Natural killer cell (primary cell): ENCODE measurements at regions of chr21 and their contacts with region 1.

Region 1: GRCh38 chr21:35026617-35027562 is 22.2 kb downstream of the RUNX1 start:
- DNase-seq: peak; percentile 78 to 95
- ATAC-seq: peak; percentile 81 to 91 (median 87)
- H3K4me3 ChIP-seq: peak overlapping the region; percentile 29
- H3K4me3 Mint-ChIP-seq: peak overlapping the region; percentile 89
- H3K27ac ChIP-seq: peak overlapping the region; percentile 85
- H3K27ac Mint-ChIP-seq: peak overlapping the region; percentile 97 to 98
- H3K4me1 ChIP-seq: peaks cover 70% of the 10 kb centered on the region
- H3K4me1 Mint-ChIP-seq: peaks cover 78 to 86% of the 10 kb centered on the region in 2 donors
- H3K27me3 ChIP-seq: no peaks in the 10 kb centered on the region
- H3K27me3 Mint-ChIP-seq: no peaks in the 10 kb centered on the region
- CTCF ChIP-seq: no peak

Region 2: DNA sequence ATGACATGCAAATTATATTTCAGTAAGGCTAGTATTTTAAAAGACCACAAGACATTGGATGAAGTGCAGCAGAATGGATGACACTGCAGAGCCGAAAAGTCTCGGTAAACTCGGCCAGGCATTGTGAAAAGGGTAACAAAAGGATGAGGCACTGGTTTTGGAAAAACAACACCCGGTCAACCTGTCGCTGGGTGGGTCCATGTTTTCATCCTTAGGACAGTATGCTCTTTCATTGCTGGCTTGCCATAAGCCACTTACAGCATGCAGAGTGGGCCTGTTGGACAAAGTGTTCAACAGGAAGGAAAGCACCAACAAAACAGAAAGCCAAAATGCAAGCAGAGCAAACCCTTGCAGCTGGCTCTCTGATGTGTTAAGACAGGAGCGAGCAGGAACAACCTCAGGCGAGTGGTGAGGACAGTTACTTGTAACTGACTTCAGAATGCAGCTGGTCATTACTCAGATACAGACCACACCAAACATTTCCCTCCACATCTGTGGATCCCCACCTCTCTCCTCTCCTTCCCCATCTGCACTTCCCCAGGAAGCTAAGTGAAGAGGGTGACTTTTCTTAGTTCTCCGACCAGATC is 409.0 kb before region 1 on chr21:
- intact Hi-C with region 1: no loop called
- DNase-seq: no peak
- ATAC-seq: no peak
- H3K4me3 ChIP-seq: no peak overlapping the region
- H3K4me3 Mint-ChIP-seq: no peak overlapping the region
- H3K27ac ChIP-seq: no peak overlapping the region
- H3K27ac Mint-ChIP-seq: no peak overlapping the region
- H3K4me1 ChIP-seq: peaks cover 10% of the 10 kb centered on the region
- H3K4me1 Mint-ChIP-seq: peaks cover 16 to 19% of the 10 kb centered on the region in 2 donors
- H3K27me3 ChIP-seq: no peaks in the 10 kb centered on the region
- H3K27me3 Mint-ChIP-seq: peaks cover 9 to 12% of the 10 kb centered on the region in 2 donors
- CTCF ChIP-seq: no peak

Region 3: DNA sequence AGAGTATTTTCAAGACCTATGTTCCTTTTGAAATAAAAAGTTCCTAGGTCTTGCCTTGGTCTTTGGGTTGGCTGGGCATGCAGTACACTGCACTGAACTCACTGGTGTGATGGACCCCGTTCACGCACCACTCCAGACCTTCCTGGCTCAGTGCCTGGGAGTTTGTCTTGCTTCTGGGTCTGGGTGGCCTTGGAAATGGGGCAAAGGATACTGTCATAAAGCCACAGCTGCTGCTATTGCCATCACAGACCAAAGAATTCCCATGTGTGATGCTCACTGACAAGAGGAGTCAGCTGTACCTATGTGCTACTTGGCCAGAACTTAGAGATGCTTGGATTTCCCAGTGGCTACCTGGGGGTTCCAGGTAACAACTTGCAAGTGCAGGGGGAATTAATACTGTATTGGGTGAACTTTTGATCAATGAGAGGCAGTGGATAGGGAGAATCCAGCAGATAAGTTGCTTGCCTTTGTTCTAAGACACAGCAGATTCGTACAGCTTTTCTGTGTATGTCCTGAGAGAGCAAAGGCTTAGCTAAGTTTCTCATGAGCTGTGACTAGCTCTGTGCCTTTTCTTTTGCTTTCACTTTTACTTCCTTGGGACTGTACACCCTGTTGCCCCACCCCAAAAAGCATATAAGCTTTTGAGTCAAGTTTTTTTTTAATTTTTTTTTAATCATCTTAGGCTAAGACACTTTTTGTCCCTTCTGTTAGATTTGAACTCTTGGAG is 93.1 kb before region 1 on chr21:
- intact Hi-C with region 1: loop called (anchors 2 kb)
- DNase-seq: peak in 1 of 2 donors; percentile 83
- ATAC-seq: peak; percentile 88 to 93 (median 91)
- H3K4me3 ChIP-seq: peak overlapping the region; percentile 11
- H3K4me3 Mint-ChIP-seq: peak overlapping the region; percentile 78
- H3K27ac ChIP-seq: peak overlapping the region; percentile 89
- H3K27ac Mint-ChIP-seq: peak overlapping the region; percentile 93
- H3K4me1 ChIP-seq: peaks cover 29% of the 10 kb centered on the region
- H3K4me1 Mint-ChIP-seq: peaks cover 62 to 80% of the 10 kb centered on the region in 2 donors
- H3K27me3 ChIP-seq: no peaks in the 10 kb centered on the region
- H3K27me3 Mint-ChIP-seq: no peaks in the 10 kb centered on the region
- CTCF ChIP-seq: no peak

Region 4: GRCh38 chr21:34974162-34974981 is 52.5 kb before region 1 on chr21:
- intact Hi-C with region 1: loop called (anchors 2 kb)
- DNase-seq: peak; percentile 31 to 84
- ATAC-seq: peak; percentile 59 to 90 (median 81)
- H3K4me3 ChIP-seq: peak overlapping the region; percentile 1
- H3K4me3 Mint-ChIP-seq: peak overlapping the region; percentile 86
- H3K27ac ChIP-seq: no peak overlapping the region
- H3K27ac Mint-ChIP-seq: peak overlapping the region; percentile 72 to 79
- H3K4me1 ChIP-seq: peaks cover 20% of the 10 kb centered on the region
- H3K4me1 Mint-ChIP-seq: peaks cover 71 to 73% of the 10 kb centered on the region in 2 donors
- H3K27me3 ChIP-seq: no peaks in the 10 kb centered on the region
- H3K27me3 Mint-ChIP-seq: peaks cover 0 to 5% of the 10 kb centered on the region in 2 donors
- CTCF ChIP-seq: no peak

Region 5: DNA sequence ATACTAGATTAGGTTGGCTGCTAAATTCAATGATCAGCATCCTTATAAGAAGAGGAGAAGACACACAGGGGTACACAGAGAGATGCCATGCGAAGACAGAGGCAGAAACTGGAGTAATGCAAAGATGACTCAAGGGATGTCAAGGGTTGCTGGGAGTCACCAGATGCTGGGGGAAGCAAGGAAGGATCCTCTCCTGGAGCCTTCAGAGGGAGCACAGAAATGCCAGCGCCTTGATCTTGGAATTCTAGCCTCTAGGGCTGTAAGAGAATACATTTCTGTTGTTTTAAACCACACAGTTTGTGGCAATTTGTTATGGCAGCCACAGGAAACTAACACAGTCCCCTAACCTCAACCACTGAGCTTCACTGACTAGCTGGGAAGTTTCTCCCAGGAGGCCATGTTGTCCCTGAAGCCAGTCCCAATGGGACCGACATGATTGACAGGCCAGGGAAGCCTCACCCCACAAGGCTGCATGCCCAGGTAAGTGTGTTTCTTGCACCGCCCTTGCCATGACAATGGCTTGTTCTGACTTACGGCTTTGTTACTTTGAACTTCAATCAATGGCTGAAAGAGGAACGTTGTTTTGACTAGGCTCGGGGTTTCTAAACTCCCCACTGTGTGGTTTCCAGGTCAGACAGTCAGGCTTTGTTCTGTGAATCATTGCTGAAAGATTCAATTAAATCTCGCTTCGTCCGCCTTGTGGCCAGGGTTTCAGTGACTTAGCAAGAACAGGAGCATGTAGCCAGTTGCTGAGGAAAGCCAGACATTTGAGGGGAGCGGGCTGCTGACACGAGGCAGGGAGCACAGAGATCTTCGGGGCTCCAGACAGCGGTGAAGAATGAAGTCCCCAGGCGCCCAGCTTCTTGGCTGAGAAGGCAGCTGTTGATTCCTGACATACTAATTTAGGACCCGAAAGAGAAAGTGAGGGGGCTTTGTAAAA is 40.1 kb before region 1 on chr21:
- intact Hi-C with region 1: loop called (anchors 2 kb)
- DNase-seq: peak; percentile 33 to 78
- ATAC-seq: peak; percentile 32 to 64 (median 48)
- H3K4me3 ChIP-seq: no peak overlapping the region
- H3K4me3 Mint-ChIP-seq: peak overlapping the region; percentile 88
- H3K27ac ChIP-seq: peak overlapping the region; percentile 57
- H3K27ac Mint-ChIP-seq: peak overlapping the region; percentile 82 to 91
- H3K4me1 ChIP-seq: peaks cover 79% of the 10 kb centered on the region
- H3K4me1 Mint-ChIP-seq: peaks cover 90 to 95% of the 10 kb centered on the region in 2 donors
- H3K27me3 ChIP-seq: no peaks in the 10 kb centered on the region
- H3K27me3 Mint-ChIP-seq: no peaks in the 10 kb centered on the region
- CTCF ChIP-seq: no peak

Region 6: DNA sequence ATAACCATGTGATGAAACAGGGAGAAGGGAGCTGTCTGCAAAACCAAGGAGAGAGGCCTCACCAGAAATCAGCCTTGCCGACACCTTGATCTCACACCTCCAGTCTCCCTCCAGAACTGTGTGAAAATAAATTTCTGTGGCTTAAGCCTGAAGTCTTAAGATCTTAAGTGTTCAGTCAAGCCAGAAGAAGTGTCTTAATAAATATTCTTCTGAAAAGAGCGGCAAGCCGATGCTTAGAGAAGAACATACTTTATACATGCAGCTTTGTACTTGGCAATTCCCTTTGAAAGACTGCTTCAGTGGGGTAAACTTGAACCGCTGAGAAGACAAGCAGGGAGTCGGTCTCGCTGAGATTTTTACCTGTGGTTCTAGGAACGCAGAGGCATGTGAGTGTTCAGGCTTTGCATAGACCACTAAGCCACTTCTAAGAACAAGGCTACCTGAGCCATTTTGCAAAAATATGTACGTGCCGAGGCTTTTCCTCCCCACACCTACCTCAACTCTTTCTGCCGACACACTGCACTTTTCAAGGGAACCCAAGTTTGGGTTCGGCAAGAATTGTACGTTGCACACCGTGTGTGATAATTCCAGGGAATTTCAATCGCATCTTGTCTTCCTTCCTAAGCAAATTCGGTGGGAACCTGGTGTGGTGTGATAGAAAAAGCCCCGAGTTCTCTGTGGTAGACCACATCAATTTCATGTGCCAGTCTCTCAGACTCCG is 18.8 kb after region 1 on chr21:
- intact Hi-C with region 1: loop called (anchors 1 kb)
- DNase-seq: peak; percentile 41 to 88
- ATAC-seq: peak; percentile 13 to 42 (median 23)
- H3K4me3 ChIP-seq: peak overlapping the region; percentile 56
- H3K4me3 Mint-ChIP-seq: peak overlapping the region; percentile 92
- H3K27ac ChIP-seq: peak overlapping the region; percentile 80
- H3K27ac Mint-ChIP-seq: peak overlapping the region; percentile 95 to 97
- H3K4me1 ChIP-seq: peaks cover 76% of the 10 kb centered on the region
- H3K4me1 Mint-ChIP-seq: peaks cover 100% of the 10 kb centered on the region in 2 donors
- H3K27me3 ChIP-seq: no peaks in the 10 kb centered on the region
- H3K27me3 Mint-ChIP-seq: peaks cover 0 to 5% of the 10 kb centered on the region in 2 donors
- CTCF ChIP-seq: no peak